HCT116 (cell line): ENCODE measurements at regions of chr18 and their contacts with region 1.

Region 1: GRCh38 chr18:54224379-54225014 is at the start of gene MBD2:
- DNase-seq: peak; percentile 89
- ATAC-seq: peak; percentile 96
- H3K4me3 ChIP-seq: peak within 1 kb of the TSS; percentile 67 to 81
- H3K27ac ChIP-seq: peak within 1 kb of the TSS; percentile 71
- H3K4me1 ChIP-seq: peaks cover 10 to 17% of the 10 kb centered on the region in 2 experiments
- H3K27me3 ChIP-seq: no peaks in the 10 kb centered on the region
- CTCF ChIP-seq: peak; percentile 8 to 28 (median 16); a peak in 3 of 6 replicates
- POLR2A ChIP-seq: peak; percentile 57
- RAD21 ChIP-seq: peak; percentile 36
- total RNA-seq, gene MBD2: 79.1 TPM

Region 2: GRCh38 chr18:54269893-54270844 is 45.7 kb after region 1 on chr18:
- CTCF ChIA-PET with region 1: interaction called, 12 read pairs
- POLR2A ChIA-PET with region 1: interaction called, 9 read pairs
- RAD21 ChIA-PET with region 1: interaction called in 1 of 2 experiments, 9 read pairs
- intact Hi-C with region 1: loop called (anchors 1 kb)
- DNase-seq: peak; percentile 68
- ATAC-seq: peak; percentile 79
- H3K4me3 ChIP-seq: peak overlapping the region; percentile 65 to 67
- H3K27ac ChIP-seq: peak overlapping the region; percentile 95
- H3K4me1 ChIP-seq: peaks cover 13 to 24% of the 10 kb centered on the region in 2 experiments
- H3K27me3 ChIP-seq: no peaks in the 10 kb centered on the region
- CTCF ChIP-seq: peak; percentile 31 to 58 (median 42); a peak in 4 of 6 replicates
- POLR2A ChIP-seq: no peak
- RAD21 ChIP-seq: peak; percentile 59

Region 3: DNA sequence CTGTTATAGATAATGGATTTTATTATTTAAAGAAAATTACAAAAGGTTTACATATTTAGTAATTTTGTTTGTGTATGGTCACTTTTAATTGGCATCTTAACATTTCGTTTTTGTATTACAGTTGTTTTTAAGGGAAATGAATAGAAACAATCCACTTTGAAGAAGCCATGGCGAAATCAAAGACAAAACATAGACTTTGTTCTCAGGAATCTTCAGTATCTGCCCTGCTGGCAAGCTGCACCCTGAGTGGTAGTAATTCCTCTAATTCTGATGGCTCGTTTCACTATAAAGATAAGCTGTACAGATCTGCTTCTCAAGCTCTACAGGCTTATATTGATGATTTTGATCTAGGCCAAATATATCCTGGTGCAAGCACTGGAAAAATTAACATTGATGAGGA is 135.9 kb after region 1 on chr18:
- CTCF ChIA-PET with region 1: no interaction called
- POLR2A ChIA-PET with region 1: no interaction called
- RAD21 ChIA-PET with region 1: no interaction called
- intact Hi-C with region 1: loop called (anchors 10 kb)
- DNase-seq: no peak
- ATAC-seq: no peak
- H3K4me3 ChIP-seq: no peak overlapping the region
- H3K27ac ChIP-seq: no peak overlapping the region
- H3K4me1 ChIP-seq: peaks cover 0 to 14% of the 10 kb centered on the region in 2 experiments; a peak in 2 of 4 replicates
- H3K27me3 ChIP-seq: no peaks in the 10 kb centered on the region
- CTCF ChIP-seq: no peak
- POLR2A ChIP-seq: no peak
- RAD21 ChIP-seq: no peak

Region 4: DNA sequence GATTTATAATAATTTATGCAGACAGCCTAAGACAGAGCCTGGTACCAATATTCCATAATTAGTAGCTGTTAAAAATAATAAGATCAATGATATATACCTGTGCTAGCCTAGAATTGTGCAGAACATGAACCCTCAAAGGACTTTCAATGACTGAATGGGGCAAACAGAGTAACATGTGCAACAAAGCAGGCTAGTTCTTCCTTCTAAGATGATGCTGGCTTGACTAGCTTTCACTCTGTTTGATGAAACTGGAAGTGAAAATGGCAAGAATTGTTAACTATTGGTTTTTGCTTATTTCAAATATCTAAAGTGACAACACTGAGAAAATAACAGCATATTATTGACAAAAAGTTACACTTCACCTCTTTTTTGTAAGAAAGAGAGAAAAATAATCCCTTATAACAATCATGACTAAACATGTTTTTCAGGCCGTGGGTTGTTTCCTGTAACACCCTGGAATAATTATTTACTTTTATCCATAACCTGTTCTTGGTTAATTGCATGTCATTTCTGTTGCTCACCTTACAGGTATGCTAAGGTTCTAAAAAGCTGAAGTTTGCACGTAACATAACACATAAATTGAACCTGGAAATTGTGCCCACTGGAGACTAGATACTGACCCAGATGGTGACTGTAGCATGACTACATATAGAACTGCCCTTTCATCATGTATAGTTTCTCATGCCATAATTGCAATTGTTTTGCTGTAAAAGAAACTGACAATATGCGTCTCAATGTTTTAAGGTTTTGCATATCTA is 241.9 kb after region 1 on chr18:
- CTCF ChIA-PET with region 1: no interaction called
- POLR2A ChIA-PET with region 1: no interaction called
- RAD21 ChIA-PET with region 1: no interaction called
- intact Hi-C with region 1: no loop called
- DNase-seq: no peak
- ATAC-seq: no peak
- H3K4me3 ChIP-seq: no peak overlapping the region
- H3K27ac ChIP-seq: no peak overlapping the region
- H3K4me1 ChIP-seq: no peaks in the 10 kb centered on the region
- H3K27me3 ChIP-seq: no peaks in the 10 kb centered on the region
- CTCF ChIP-seq: no peak
- POLR2A ChIP-seq: no peak
- RAD21 ChIP-seq: no peak